ENCODE measurements at regions of chr10 and their contacts with region 1.

Region 1: GRCh38 chr10:73879296-73880173 is 5.2 kb upstream of the CAMK2G start:
- DNase-seq: peak; percentile 85
- CTCF ChIP-seq: peak; percentile 87

Region 2: DNA sequence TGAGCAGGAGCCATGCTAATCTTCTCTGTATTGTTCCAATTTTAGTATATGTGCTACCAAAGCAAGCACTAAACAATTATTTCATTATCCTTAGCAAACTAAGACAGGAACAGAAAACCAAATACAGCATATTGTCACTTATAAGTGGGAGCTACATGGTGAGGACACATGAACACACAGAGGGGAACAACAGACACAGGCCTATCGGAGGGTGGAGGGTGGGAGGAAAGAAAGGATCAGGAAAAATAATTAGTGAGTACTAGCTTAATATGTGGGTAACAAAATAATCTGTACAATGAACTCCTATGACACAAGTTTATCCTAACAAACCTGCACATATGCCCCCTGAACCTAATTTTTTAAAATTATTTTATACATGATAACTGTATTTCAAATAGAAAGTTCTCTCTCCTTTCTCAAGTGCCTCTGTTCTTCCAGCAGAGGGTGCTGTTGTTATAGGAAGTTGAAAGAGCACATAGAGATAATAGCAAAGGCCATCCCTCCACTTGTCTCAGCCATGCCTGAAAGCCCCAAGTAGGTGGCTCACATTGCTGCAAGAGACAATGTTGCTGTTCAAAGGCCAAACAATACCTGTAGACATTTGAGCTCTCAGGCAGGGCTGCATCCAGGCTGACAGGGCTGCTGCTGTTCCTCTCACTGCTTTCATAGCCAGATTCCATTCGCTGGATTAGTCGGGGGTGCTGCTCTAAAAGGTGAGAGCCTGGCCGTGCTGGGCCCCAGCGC is 350.3 kb before region 1 on chr10:
- CTCF ChIA-PET with region 1: interaction called, 20 read pairs
- POLR2A ChIA-PET with region 1: no interaction called
- DNase-seq: peak; percentile 82
- CTCF ChIP-seq: peak; percentile 75

Region 3: GRCh38 chr10:73827346-73828089 is 52.0 kb before region 1 on chr10:
- CTCF ChIA-PET with region 1: interaction called, 11 read pairs
- POLR2A ChIA-PET with region 1: no interaction called
- DNase-seq: no peak
- CTCF ChIP-seq: no peak

Region 4: GRCh38 chr10:73857446-73857845 is 22.1 kb before region 1 on chr10:
- CTCF ChIA-PET with region 1: interaction called, 383 read pairs
- POLR2A ChIA-PET with region 1: no interaction called
- DNase-seq: peak; percentile 71
- CTCF ChIP-seq: no peak

Region 5: GRCh38 chr10:73940634-73941221 is 61.2 kb after region 1 on chr10:
- CTCF ChIA-PET with region 1: interaction called, 566 read pairs
- POLR2A ChIA-PET with region 1: no interaction called
- DNase-seq: peak; percentile 89
- CTCF ChIP-seq: peak; percentile 96

Region 6: GRCh38 chr10:74103560-74104248 is 224.2 kb after region 1 on chr10:
- CTCF ChIA-PET with region 1: interaction called, 13 read pairs
- POLR2A ChIA-PET with region 1: no interaction called
- DNase-seq: peak; percentile 63
- CTCF ChIP-seq: peak; percentile 59

Measured in GM10248 (cell line).